ENCODE measurements at regions of chr5 and their contacts with region 1.

Region 1: GRCh38 chr5:133015466-133015865 is 10.9 kb downstream of the ZCCHC10 start:
- DNase-seq: no peak
- H3K4me3 ChIP-seq: no peak overlapping the region
- H3K27ac ChIP-seq: no peak overlapping the region
- H3K4me1 ChIP-seq: no peaks in the 10 kb centered on the region
- H3K27me3 ChIP-seq: no peaks in the 10 kb centered on the region
- CTCF ChIP-seq: no peak

Region 2: DNA sequence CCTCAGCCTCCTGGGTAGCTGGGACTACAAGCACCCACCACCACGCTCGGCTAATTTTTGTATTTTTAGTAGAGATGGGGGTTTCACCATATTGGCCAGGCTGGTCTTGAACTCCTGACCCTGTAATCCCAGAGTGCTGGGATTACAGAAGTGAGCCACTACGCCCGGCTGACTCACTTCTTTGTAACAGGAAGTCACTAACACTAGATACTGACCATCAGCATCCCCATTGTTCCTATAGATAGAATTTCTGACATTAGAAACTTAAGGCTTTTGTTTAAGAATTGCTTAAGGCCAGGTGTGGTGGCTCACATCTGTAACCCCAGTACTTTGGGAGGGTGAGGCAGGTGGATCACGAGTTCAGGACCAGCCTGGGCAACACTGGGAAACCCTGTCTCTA is 99.8 kb before region 1 on chr5:
- CTCF ChIA-PET with region 1: no interaction called
- POLR2A ChIA-PET with region 1: interaction called, 22 read pairs
- intact Hi-C with region 1: no loop called
- DNase-seq: no peak
- H3K4me3 ChIP-seq: no peak overlapping the region
- H3K27ac ChIP-seq: no peak overlapping the region
- H3K4me1 ChIP-seq: no peaks in the 10 kb centered on the region
- H3K27me3 ChIP-seq: no peaks in the 10 kb centered on the region
- CTCF ChIP-seq: no peak

Region 3: DNA sequence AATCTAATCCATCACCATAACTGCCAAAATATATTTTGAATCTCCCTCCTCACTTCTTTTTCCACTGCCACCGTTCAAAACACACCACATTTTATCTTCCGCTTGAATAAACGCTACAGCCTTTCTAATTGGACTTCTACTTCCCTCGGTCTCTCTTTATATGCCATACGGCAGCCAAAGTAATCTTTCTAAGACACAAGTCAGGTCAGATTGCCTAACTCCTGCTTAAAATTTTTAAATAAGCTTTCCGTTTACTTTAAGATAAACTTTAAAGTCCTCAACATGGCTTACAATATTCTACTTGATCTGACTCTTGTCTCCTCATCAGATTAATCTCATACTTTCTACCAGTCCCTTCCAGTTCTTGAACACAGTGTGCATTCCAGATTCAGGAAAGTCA is 61.8 kb before region 1 on chr5:
- CTCF ChIA-PET with region 1: no interaction called
- POLR2A ChIA-PET with region 1: interaction called, 14 read pairs
- intact Hi-C with region 1: no loop called
- DNase-seq: no peak
- H3K4me3 ChIP-seq: no peak overlapping the region
- H3K27ac ChIP-seq: no peak overlapping the region
- H3K4me1 ChIP-seq: peaks cover 7% of the 10 kb centered on the region; the same call in 1 of the 2 replicates
- H3K27me3 ChIP-seq: no peaks in the 10 kb centered on the region
- CTCF ChIP-seq: no peak

Region 4: DNA sequence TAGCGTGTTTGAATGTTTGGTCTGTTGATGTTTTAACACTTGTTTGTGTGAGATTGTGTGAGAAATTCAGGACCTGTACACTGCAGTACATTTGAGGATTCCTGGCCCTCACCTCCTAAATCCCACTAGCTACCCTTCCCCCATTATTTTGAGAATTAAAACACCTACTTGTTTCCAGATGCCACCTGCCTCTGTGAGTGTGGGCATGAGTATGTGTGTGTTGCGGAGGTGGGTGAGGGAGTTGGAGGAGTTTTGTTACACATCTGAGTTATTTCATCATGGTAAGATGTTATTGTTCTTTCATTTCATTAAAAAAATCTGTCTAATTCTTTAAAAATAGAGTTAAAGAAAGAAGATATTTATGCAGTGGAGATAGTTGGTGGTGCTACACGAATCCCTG is 72.6 kb after region 1 on chr5:
- CTCF ChIA-PET with region 1: no interaction called
- POLR2A ChIA-PET with region 1: no interaction called
- intact Hi-C with region 1: loop called (anchors 2 kb)
- DNase-seq: no peak
- H3K4me3 ChIP-seq: no peak overlapping the region
- H3K27ac ChIP-seq: no peak overlapping the region
- H3K4me1 ChIP-seq: no peaks in the 10 kb centered on the region
- H3K27me3 ChIP-seq: no peaks in the 10 kb centered on the region
- CTCF ChIP-seq: no peak